ENCODE measurements at regions of chr9 and their contacts with region 1.

Region 1: GRCh38 chr9:25602400-25603046 is 75.7 kb downstream of the TUSC1 start:
- DNase-seq: no peak
- H3K4me3 ChIP-seq: no peak overlapping the region
- H3K27ac ChIP-seq: peak overlapping the region in 2 of 4 donors; percentile 18 to 28
- H3K4me1 ChIP-seq: peaks cover 0 to 17% (median 8%) of the 10 kb centered on the region in 4 donors
- H3K27me3 ChIP-seq: no peaks in the 10 kb centered on the region
- CTCF ChIP-seq: no peak
- EP300 ChIP-seq: peak in 1 of 4 donors; percentile 17
- POLR2A ChIP-seq: no peak

Region 2: DNA sequence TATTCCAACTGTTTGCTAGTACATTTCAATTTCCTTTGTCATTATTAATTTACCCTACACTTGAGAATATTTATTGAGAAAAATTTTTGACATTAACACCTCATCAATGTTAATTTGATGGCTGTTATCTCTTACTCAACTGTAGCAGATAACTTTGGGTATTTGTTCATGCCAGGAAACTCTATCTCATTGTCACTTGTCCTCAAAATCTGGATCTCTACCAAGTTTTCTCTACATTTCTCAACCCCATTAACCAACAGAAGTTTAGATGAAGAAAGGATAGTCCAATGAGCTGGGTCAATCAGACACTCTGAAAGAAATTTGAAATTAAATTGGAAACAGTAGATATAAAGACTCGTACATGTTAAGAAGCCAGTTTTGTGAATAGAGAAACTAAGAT is 319.6 kb before region 1 on chr9:
- intact Hi-C with region 1: no loop called
- DNase-seq: no peak
- H3K4me3 ChIP-seq: no peak overlapping the region
- H3K27ac ChIP-seq: no peak overlapping the region
- H3K4me1 ChIP-seq: no peaks in the 10 kb centered on the region
- H3K27me3 ChIP-seq: no peaks in the 10 kb centered on the region
- CTCF ChIP-seq: no peak
- EP300 ChIP-seq: no peak
- POLR2A ChIP-seq: no peak

Region 3: GRCh38 chr9:25678162-25678666 is 75.7 kb after region 1 on chr9 and contains the start of gene TUSC1:
- intact Hi-C with region 1: loop called (anchors 5 kb)
- DNase-seq: peak; percentile 93
- H3K4me3 ChIP-seq: peak within 1 kb of the TSS; percentile 63 to 89 (median 78)
- H3K27ac ChIP-seq: peak within 1 kb of the TSS; percentile 91 to 98 (median 96)
- H3K4me1 ChIP-seq: peaks cover 0 to 21% (median 13%) of the 10 kb centered on the region in 4 donors
- H3K27me3 ChIP-seq: no peaks in the 10 kb centered on the region
- CTCF ChIP-seq: peak in 3 of 4 experiments; percentile 10 to 29 (median 27)
- EP300 ChIP-seq: peak in 1 of 4 donors; percentile 66
- POLR2A ChIP-seq: no peak
- total RNA-seq, gene TUSC1: 17.7 to 25.5 (median 21.3) TPM

Measured in sigmoid colon (tissue), 7 donors.